Right ventricle myocardium superior (tissue), 1 donor: ENCODE measurements at regions of chr17 and their contacts with region 1.

Region 1: DNA sequence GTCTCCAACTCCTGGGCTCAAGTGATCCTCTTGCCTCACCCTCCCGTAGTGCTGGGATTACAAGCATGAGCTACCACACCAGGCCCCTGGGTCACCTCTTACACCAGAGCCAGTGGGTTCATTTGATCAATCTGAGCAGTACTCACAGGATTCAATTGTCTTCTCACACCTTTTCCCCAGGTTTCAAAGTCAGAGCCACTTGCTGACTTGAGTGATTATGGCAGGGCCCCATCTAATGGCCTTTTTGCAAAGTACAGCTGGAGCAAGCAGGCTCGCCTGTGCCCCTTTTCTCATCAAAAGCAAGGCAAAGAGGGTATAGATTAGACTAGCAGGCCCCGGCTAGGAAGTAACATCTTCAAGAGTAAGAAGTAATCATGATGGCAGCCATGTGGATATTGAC is 114.8 kb upstream of the NOL11 start:
- DNase-seq: no peak
- ATAC-seq: peak; percentile 37

Region 2: GRCh38 chr17:67390646-67391384 is 212.1 kb before region 1 on chr17:
- intact Hi-C with region 1: no loop called
- DNase-seq: no peak
- ATAC-seq: peak; percentile 65

Region 3: GRCh38 chr17:67488161-67488560 is 114.8 kb before region 1 on chr17:
- intact Hi-C with region 1: loop called (anchors 10 kb)
- DNase-seq: peak; percentile 78
- ATAC-seq: peak; percentile 67

Region 4: DNA sequence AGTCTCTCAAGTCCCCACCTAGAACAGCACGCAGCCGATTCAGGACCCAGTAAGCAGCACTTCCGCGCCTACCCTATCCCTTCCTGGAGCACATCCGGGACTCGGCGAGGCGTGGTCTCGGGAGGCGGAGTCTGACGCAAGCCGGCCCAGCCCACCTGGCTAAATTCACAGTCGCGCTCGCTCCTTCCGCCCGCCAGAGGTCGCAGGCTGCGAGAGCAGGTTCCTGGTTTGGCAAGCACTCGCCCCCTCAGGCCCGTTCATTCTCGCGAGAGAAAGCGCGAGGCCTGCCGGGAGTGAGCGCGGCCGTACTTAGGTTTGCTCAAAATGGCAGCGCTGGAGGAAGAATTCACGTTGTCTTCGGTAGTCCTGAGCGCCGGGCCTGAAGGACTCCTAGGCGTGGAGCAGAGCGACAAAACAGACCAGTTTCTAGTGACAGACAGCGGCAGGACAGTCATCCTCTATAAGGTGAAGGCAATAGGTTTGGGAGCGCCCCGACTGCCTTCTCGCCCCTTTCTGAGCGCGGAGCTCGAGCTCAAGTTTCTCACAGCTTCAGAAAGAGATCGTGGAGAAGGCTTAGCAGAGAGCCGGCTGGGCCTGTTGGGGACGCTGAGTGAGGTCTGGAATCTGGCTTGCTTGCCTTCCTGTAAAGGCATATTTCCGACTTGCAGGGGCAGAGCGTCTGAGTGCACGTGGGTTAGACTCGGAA is 114.8 kb after region 1 on chr17 and contains the start of gene NOL11:
- intact Hi-C with region 1: no loop called
- DNase-seq: peak; percentile 100
- ATAC-seq: peak; percentile 99
- total RNA-seq, gene NOL11: 22.6 TPM